Right ventricle myocardium inferior (tissue), 1 donor: ENCODE measurements at regions of chr2 and their contacts with region 1.

Region 1: GRCh38 chr2:35246702-35247101 is 1108.9 kb upstream of the CRIM1 start:
- DNase-seq: no peak
- ATAC-seq: no peak

Region 2: GRCh38 chr2:35220471-35220870 is 26.2 kb before region 1 on chr2:
- intact Hi-C with region 1: loop called (anchors 2 kb)
- DNase-seq: no peak
- ATAC-seq: no peak